HEK293 (cell line): ENCODE measurements at regions of chr5 and their contacts with region 1.

Region 1: DNA sequence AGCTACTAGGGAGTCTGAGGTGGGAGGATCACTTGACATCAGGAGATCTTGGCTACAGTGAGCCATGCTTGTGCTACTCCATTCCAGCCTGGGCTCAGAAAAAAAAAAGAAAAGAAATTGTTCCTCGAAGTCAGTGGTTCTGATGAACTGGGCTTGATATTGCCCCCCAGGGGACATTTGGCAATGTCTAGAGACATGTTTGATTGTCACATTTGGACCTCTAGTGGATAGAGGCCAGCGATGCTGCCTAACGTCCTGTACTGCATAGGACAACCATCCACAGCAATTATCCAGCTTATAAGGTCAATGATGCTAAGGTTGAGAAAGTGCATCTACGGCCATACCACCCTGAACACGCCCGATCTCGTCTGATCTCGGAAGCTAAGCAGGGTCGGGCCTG is 37.0 kb upstream of the TTC23L start:
- H3K4me3 ChIP-seq: no peak overlapping the region
- H3K27ac ChIP-seq: no peak overlapping the region
- H3K4me1 ChIP-seq: no peaks in the 10 kb centered on the region
- CTCF ChIP-seq: peak; percentile 55; the same call in 1 of the 2 replicates

Region 2: GRCh38 chr5:34866989-34867471 is 65.1 kb after region 1 on chr5:
- CTCF ChIA-PET with region 1: interaction called, 10 read pairs
- POLR2A ChIA-PET with region 1: no interaction called
- H3K4me3 ChIP-seq: no peak overlapping the region
- H3K27ac ChIP-seq: no peak overlapping the region
- H3K4me1 ChIP-seq: peaks cover 7% of the 10 kb centered on the region; the same call in 1 of the 2 replicates
- CTCF ChIP-seq: no peak

Region 3: DNA sequence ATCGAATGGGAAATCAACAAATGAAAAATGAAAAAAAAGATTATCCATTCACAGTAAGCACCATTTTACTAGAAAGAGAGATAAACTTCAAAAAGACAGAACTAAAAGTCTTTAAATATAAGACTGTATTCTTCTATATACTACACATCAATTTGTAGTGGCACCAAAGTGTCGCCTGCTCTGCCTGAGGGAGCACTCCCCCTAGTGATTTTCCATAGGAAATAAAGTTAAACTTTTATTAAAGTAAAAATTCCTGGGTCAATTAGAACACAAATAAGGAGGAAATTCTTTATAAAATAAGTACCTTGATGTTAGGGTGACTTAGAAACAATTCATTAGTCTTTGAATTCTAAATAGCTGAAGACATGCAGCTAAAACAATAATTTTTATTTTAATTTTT is 103.6 kb after region 1 on chr5:
- CTCF ChIA-PET with region 1: no interaction called
- POLR2A ChIA-PET with region 1: no interaction called
- H3K4me3 ChIP-seq: no peak overlapping the region
- H3K27ac ChIP-seq: no peak overlapping the region
- H3K4me1 ChIP-seq: no peaks in the 10 kb centered on the region
- CTCF ChIP-seq: no peak